ENCODE measurements at regions of chr3 and their contacts with region 1.

Region 1: DNA sequence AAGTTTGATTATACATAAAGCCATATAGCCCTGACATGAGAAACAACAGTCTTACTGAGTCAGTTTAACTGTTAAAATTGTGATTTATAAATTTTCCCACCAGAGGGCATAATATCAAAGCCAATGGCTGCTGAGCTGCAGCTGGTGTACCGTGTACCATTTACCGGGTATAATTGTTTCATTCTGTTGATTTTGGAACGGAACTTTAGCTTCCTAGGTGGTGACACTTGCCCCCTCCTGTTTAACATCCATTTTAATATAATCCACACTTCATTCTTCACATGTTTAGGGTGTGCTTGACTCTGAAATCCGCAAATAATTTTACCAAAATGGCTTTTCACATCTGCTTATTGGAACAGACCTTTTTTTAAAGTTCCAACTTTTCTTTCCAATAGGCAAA is 72.8 kb downstream of the SLC9A9 start:
- DNase-seq: no peak
- ATAC-seq: peak; percentile 96
- H3K4me3 ChIP-seq: no peak overlapping the region
- H3K27ac ChIP-seq: no peak overlapping the region
- H3K4me1 ChIP-seq: no peaks in the 10 kb centered on the region
- H3K27me3 ChIP-seq: no peaks in the 10 kb centered on the region
- CTCF ChIP-seq: peak; percentile 44 to 68 (median 50); a peak in 5 of 6 replicates
- EP300 ChIP-seq: no peak
- POLR2A ChIP-seq: no peak
- RAD21 ChIP-seq: peak; percentile 87

Region 2: GRCh38 chr3:143831208-143831607 is 55.7 kb after region 1 on chr3:
- CTCF ChIA-PET with region 1: interaction called, 3 read pairs
- POLR2A ChIA-PET with region 1: no interaction called
- RAD21 ChIA-PET with region 1: no interaction called
- SMC1A ChIA-PET with region 1: no interaction called
- in situ Hi-C with region 1: no loop called
- intact Hi-C with region 1: loop called (anchors 5 kb)
- DNase-seq: no peak
- ATAC-seq: peak; percentile 54
- H3K4me3 ChIP-seq: peak overlapping the region; percentile 28; the same call in 1 of the 2 replicates
- H3K27ac ChIP-seq: peak overlapping the region; percentile 76
- H3K4me1 ChIP-seq: peaks cover 12% of the 10 kb centered on the region
- H3K27me3 ChIP-seq: no peaks in the 10 kb centered on the region
- CTCF ChIP-seq: no peak
- EP300 ChIP-seq: no peak
- POLR2A ChIP-seq: no peak
- RAD21 ChIP-seq: no peak

Region 3: DNA sequence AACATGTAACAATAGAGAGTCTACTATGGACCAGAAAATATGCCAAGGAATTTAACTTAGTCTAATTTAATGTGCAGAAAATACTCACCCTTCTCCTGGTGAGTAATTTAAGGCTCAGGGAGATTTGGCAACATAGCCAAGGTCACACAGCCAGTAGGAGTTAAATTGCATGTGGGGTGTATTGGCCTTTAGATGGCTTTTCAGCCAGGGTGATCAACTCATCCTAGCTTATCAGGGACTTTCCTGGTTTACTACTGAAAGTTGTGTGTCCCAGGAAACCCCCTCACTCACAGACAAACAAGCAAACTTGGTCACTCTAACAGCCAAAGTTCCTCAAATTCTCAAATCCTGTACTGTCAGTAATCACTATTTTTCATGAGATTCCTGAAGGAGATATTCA is 75.4 kb after region 1 on chr3:
- CTCF ChIA-PET with region 1: no interaction called
- POLR2A ChIA-PET with region 1: no interaction called
- RAD21 ChIA-PET with region 1: interaction called, 3 read pairs
- SMC1A ChIA-PET with region 1: interaction called, 3 read pairs
- in situ Hi-C with region 1: no loop called
- intact Hi-C with region 1: loop called (anchors 1 kb)
- DNase-seq: no peak
- ATAC-seq: peak; percentile 52
- H3K4me3 ChIP-seq: no peak overlapping the region
- H3K27ac ChIP-seq: peak overlapping the region; percentile 70; the same call in 1 of the 2 replicates
- H3K4me1 ChIP-seq: peaks cover 29% of the 10 kb centered on the region
- H3K27me3 ChIP-seq: no peaks in the 10 kb centered on the region
- CTCF ChIP-seq: no peak
- EP300 ChIP-seq: no peak
- POLR2A ChIP-seq: no peak
- RAD21 ChIP-seq: no peak

Region 4: GRCh38 chr3:143885780-143886427 is 110.4 kb after region 1 on chr3:
- CTCF ChIA-PET with region 1: interaction called, 8 read pairs
- POLR2A ChIA-PET with region 1: no interaction called
- RAD21 ChIA-PET with region 1: interaction called, 4 read pairs
- SMC1A ChIA-PET with region 1: interaction called, 3 read pairs
- in situ Hi-C with region 1: no loop called
- intact Hi-C with region 1: loop called (anchors 2 kb)
- DNase-seq: peak; percentile 15
- ATAC-seq: peak; percentile 97
- H3K4me3 ChIP-seq: no peak overlapping the region
- H3K27ac ChIP-seq: no peak overlapping the region
- H3K4me1 ChIP-seq: no peaks in the 10 kb centered on the region
- H3K27me3 ChIP-seq: no peaks in the 10 kb centered on the region
- CTCF ChIP-seq: peak; percentile 77 to 82 (median 77)
- EP300 ChIP-seq: no peak
- POLR2A ChIP-seq: no peak
- RAD21 ChIP-seq: peak; percentile 82

Region 5: DNA sequence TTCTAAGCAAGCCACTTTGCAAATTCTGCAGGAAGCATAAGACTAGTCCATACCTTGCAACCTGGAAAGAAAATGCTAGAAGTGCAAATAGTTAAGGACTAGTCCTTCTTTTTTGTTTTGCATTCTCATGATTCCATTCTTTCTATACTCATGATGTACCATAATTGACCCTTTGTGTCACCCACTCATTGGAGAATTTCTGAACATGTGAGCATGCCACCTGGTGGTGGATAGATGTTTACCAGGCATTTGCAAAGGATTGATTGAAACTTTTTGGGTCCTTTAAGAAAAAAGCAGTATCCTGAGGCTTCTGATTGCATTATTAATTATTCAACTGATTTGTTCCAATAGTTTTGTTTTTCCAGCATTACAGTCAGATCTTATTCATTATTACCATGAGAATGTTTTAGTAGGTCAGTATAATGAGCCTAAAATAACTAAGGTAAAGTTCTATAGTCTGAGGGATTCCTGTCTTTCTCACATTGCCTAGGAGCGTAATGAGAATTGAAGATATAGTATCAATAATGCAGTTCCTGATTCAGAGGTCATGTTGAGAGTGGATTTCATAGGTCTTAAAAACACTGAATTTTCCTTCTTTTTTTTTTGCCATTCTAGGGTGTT is 176.0 kb after region 1 on chr3:
- CTCF ChIA-PET with region 1: interaction called, 7 read pairs
- POLR2A ChIA-PET with region 1: no interaction called
- RAD21 ChIA-PET with region 1: interaction called, 3 read pairs
- SMC1A ChIA-PET with region 1: no interaction called
- in situ Hi-C with region 1: loop called (anchors 10 kb)
- intact Hi-C with region 1: loop called (anchors 1 kb)
- DNase-seq: no peak
- ATAC-seq: peak; percentile 78
- H3K4me3 ChIP-seq: no peak overlapping the region
- H3K27ac ChIP-seq: no peak overlapping the region
- H3K4me1 ChIP-seq: no peaks in the 10 kb centered on the region
- H3K27me3 ChIP-seq: no peaks in the 10 kb centered on the region
- CTCF ChIP-seq: peak; percentile 63 to 74 (median 65)
- EP300 ChIP-seq: no peak
- POLR2A ChIP-seq: no peak
- RAD21 ChIP-seq: peak; percentile 77

Measured in GM12878 (cell line).